ENCODE measurements at regions of chr3 and their contacts with region 1.

Region 1: GRCh38 chr3:17032407-17033034 is 147.8 kb downstream of the PLCL2 start:
- DNase-seq: no peak
- ATAC-seq: peak; percentile 62 to 76
- H3K4me3 ChIP-seq: no peak overlapping the region
- H3K27ac ChIP-seq: no peak overlapping the region
- H3K4me1 ChIP-seq: peaks cover 2% of the 10 kb centered on the region
- H3K27me3 ChIP-seq: no peaks in the 10 kb centered on the region

Region 2: GRCh38 chr3:16600780-16601539 is 431.6 kb before region 1 on chr3:
- intact Hi-C with region 1: loop called in 2 of 4 experiments (anchors 5 to 10 kb)
- DNase-seq: peak; percentile 84 to 93 (median 86)
- ATAC-seq: peak; percentile 60 to 76
- H3K4me3 ChIP-seq: no peak overlapping the region
- H3K27ac ChIP-seq: no peak overlapping the region
- H3K4me1 ChIP-seq: no peaks in the 10 kb centered on the region
- H3K27me3 ChIP-seq: no peaks in the 10 kb centered on the region

Region 3: DNA sequence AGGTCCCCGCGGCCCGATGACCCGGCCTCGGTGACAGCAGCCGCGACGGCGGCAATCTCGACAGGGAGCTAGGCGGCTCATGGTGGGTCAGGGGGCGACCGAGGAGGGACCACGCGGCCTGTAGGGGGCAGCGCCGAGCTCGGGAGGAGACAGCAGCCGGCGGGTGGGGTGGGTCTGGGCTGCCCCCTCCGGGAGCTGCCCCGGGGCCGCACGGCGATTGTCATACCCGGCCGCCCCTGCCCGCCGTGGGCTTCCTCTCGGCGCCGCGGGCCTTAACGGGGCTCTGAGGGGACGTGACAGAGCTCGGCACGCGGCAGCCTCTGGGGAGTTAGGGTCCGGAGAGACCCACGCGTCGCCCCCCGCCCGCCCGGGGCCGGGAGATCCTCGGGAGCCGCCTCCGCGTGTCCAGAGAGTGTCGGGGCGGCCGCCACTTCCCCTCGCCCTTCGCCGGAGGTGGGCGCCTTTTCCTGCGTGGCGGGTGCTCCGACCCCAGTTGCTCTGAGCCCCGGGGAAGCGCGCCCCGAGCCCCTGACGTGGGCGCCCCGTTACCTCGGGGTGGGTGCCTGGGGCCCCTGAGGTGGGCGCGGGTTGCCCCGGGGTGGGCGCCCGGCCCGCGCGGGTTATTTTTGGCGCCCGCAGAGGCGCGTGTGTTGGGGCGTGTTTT is 148.3 kb before region 1 on chr3:
- intact Hi-C with region 1: loop called in 3 of 4 experiments (anchors 5 to 10 kb)
- DNase-seq: peak; percentile 78 to 92 (median 86)
- ATAC-seq: peak; percentile 79 to 85
- H3K4me3 ChIP-seq: peak overlapping the region; percentile 59
- H3K27ac ChIP-seq: peak overlapping the region; percentile 31
- H3K4me1 ChIP-seq: peaks cover 2% of the 10 kb centered on the region
- H3K27me3 ChIP-seq: no peaks in the 10 kb centered on the region

Region 4: DNA sequence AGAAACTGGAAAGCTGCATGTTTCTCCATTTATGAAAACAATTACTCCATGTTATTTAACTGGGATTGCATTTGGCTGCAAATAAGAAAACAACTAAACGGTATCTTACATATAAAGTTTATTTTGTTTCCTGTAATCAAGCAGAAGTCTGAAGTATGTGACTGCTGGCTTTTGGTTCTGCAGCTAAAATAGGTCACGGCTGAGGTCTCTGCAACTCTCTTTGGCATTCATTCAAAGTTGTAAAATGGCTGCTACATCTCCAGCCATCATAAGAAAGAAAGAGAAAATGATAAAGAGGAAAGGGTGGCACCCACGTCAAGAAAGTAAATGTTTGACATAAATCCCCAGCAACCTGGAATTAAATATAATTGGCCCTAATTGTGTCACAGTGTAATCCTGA is 303.8 kb after region 1 on chr3:
- intact Hi-C with region 1: no loop called
- DNase-seq: no peak
- ATAC-seq: peak in 1 of 2 donors; percentile 57
- H3K4me3 ChIP-seq: no peak overlapping the region
- H3K27ac ChIP-seq: no peak overlapping the region
- H3K4me1 ChIP-seq: peaks cover 4% of the 10 kb centered on the region
- H3K27me3 ChIP-seq: no peaks in the 10 kb centered on the region

Measured in right cardiac atrium (tissue), 5 donors.